Activated CD4-positive, alpha-beta T cell treated with anti-CD3 and anti-CD28 coated beads, Interleukin-2, amount 10 ng/mL, durations not matched to agents 7 days and 5 days (primary cell): ENCODE measurements at regions of chr4 and their contacts with region 1.

Region 1: DNA sequence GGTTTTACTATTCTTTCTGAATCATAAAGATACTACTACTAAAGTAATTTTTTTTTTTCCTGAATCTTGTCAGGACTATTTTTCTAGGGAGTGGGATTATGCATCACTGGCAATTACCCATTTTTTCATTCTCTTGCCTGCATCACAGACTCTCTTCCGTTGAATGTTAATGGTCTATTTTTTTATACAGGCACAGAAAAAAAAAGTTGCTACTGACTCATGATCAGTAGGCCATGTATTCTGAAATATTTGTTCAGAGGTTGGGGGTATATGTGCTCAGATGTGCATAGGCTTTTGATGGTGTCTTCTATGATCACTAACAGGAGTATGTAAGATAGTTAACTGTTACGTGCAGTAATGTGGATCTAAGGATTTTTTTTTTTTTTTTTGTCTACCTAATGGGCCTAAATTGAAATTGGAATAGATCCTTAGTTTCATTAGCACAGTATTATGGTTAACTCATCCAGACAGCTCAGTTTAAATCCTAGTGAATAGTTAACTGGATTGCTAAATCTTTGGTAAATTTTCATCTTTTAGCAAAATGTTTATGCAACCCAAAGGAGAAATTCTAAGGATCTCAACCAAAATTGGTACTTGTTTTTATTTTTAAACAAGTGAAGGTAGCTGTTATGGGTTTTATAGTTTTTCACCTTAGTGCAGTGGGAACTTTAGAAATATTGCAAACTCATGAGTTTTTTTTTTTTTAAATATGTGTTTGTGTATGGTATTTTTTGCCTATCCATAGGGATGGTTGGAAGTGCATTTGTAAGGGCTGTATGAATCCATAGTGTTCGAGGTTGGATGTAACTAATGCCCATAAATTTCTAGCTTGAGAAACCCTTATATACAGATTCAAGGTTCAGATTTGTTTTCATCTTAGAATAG is 12.1 kb downstream of the BMP2K start:
- DNase-seq: no peak
- H3K4me3 Mint-ChIP-seq: no peak overlapping the region
- H3K27ac Mint-ChIP-seq: no peak overlapping the region
- H3K4me1 Mint-ChIP-seq: peaks cover 8% of the 10 kb centered on the region
- H3K27me3 Mint-ChIP-seq: no peaks in the 10 kb centered on the region

Region 2: GRCh38 chr4:78001531-78001930 is 786.7 kb before region 1 on chr4:
- CTCF ChIA-PET with region 1: no interaction called
- POLR2A ChIA-PET with region 1: interaction called, 10 read pairs
- DNase-seq: no peak
- H3K4me3 Mint-ChIP-seq: no peak overlapping the region
- H3K27ac Mint-ChIP-seq: no peak overlapping the region
- H3K4me1 Mint-ChIP-seq: no peaks in the 10 kb centered on the region
- H3K27me3 Mint-ChIP-seq: peaks cover 12% of the 10 kb centered on the region

Region 3: GRCh38 chr4:78432896-78433295 is 355.4 kb before region 1 on chr4:
- CTCF ChIA-PET with region 1: no interaction called
- POLR2A ChIA-PET with region 1: no interaction called
- DNase-seq: no peak
- H3K4me3 Mint-ChIP-seq: no peak overlapping the region
- H3K27ac Mint-ChIP-seq: no peak overlapping the region
- H3K4me1 Mint-ChIP-seq: no peaks in the 10 kb centered on the region
- H3K27me3 Mint-ChIP-seq: peaks cover 19% of the 10 kb centered on the region

Region 4: DNA sequence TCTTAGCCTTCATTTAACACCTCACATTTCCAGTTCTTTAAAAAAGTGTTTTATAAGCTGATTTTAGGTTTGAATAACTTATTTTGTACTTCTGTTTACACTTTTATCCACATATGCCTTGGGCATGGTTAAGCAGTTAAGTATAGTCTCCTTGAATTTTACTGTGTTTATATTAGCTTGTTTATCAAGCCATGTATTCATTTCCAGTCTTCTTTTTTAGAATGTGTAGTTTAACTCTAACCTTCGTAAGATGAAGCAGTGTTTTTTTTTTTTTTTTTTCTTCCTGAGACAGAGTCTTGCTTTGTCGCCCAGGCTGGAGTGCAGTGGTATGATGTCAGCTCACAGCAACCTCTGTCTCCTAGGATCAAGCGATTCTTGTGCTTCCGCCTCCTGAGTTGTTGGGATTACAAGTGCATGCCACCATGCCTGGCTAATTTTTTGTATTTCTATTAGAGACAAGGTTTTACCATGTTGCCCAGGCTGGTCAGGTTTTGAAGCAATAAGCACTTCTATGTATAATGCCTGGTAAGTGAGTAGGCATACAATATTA is 30.4 kb after region 1 on chr4:
- CTCF ChIA-PET with region 1: no interaction called
- POLR2A ChIA-PET with region 1: no interaction called
- DNase-seq: no peak
- H3K4me3 Mint-ChIP-seq: no peak overlapping the region
- H3K27ac Mint-ChIP-seq: no peak overlapping the region
- H3K4me1 Mint-ChIP-seq: no peaks in the 10 kb centered on the region
- H3K27me3 Mint-ChIP-seq: no peaks in the 10 kb centered on the region